ENCODE measurements at regions of chr18 and their contacts with region 1.

Region 1: DNA sequence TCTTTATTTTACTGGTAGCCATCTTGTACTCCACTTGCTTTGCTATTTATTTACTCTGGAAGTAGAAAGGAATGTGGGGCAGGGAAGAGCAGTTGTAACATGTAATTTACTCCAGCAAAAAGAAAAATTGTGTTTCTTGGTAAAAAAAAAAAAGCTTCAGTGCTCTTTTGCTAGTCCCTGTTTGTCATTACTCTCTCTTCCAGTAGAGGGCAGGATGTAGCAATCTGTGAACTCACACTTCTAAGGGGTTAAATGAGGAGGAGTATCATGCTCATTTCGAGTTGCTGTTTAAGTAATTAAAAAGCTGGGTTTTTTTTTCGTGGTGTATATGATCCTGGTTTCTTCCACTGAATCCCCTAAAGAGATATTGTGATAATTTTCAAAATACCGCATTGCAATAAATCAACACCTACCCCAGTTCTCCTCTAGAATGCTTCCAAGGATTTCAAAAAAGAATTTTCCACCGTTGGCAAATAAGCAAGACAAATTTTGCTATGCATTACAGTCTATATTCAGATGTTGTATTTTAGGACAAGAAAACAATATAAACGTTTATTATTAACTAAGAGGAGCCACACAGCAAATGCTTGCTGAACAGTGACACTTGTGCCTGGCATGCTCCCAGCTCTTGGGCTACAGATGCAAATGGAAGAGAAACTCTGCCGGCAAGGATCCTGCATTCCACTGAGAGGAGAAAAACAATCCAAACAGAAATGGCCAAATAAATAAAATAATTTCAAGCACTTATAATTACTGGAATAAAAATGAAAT is 261.6 kb downstream of the ASXL3 start:
- DNase-seq: peak; percentile 32
- CTCF ChIP-seq: peak; percentile 76

Region 2: DNA sequence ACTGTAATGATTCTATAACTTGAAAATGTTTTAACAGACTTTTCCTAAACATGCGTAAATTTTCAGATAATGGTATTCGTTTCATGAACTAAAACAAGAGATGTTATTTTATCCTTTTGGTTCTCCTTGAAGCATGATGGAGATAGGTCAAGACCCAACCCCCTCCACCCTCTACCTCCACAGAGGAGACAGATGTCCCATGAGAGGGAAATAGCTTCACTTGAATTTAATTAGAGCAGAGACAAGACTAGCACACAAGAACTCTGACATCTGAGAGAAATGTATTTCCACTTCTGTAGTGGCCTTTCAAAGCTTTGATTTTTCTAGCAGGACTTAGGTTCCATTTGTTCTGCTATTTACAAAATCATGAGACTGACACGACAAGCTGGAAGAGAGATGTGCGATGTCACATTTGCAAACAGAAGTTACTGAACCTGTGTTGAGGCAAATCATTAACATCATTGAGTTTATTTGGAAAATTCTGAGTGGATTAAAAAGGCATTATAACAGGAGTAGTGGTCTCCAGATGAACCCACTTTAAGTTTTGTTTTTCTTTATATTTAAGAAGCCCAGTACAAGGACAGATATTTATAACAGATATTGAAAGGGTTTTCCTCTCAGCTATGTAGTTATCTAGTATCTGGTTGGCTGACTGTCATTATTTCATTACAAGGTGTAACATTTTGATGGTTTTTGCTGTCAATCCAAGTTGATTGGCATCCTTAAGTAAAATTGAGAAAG is 14.6 kb after region 1 on chr18:
- CTCF ChIA-PET with region 1: interaction called, 15 read pairs
- POLR2A ChIA-PET with region 1: no interaction called
- DNase-seq: no peak
- CTCF ChIP-seq: no peak